Common myeloid progenitor, CD34-positive (primary cell): ENCODE measurements at regions of chr3 and their contacts with region 1.

Region 1: DNA sequence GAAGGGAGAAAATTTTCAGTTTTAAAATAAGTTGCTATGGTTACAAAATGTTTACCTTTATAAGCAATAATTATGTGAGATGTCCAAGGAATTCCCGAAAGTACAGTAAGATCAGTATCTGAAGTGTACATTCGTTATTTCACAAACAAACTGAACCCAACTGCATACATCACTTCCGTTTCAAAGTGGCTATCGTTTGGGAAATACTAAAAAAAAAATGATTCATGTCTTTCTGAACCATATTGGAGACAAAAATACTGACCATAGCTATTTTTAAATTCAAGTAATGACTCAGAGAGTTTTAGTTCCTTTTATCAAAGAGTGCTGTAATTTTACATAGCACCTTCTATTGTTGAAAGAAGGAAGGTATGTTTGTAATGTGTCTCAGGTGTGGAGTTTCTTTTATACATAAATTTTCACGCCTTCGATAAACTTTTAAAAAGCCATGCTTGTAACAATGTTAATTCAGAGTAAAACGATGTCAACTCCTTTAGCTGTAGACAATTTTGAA is 8.0 kb upstream of the ANKRD28 start:
- DNase-seq: peak; percentile 84 to 95 (median 93)
- H3K4me3 ChIP-seq: peak overlapping the region in 2 of 7 experiments; percentile 1 to 40
- H3K27ac ChIP-seq: peak overlapping the region; percentile 93 to 96
- H3K4me1 ChIP-seq: peaks cover 34 to 92% (median 59%) of the 10 kb centered on the region in 4 experiments
- H3K27me3 ChIP-seq: no peaks in the 10 kb centered on the region

Region 2: DNA sequence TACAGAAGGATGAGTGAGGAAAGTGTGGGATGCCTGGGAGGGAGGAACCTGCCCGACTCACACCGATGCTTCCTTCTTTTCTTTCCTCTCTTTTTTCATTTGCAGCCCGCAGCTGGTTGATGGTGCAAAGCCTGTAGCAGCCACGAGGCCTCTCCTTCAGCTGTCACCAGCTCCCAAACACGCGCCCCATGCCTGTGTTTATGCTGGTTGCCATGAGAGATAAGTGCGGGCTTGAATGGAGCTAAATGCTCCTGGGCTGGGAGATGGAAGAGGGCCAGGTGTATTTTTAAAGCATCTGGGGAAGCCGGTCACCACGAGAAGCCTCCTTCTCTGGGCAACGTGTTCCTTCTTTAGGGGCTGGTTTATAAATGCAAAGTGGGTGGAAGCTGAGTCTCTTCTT is 293.6 kb before region 1 on chr3:
- CTCF ChIA-PET with region 1: no interaction called
- POLR2A ChIA-PET with region 1: no interaction called
- DNase-seq: peak; percentile 68 to 89 (median 83)
- H3K4me3 ChIP-seq: no peak overlapping the region
- H3K27ac ChIP-seq: no peak overlapping the region
- H3K4me1 ChIP-seq: peaks cover 0 to 30% (median 21%) of the 10 kb centered on the region in 4 experiments
- H3K27me3 ChIP-seq: no peaks in the 10 kb centered on the region

Region 3: DNA sequence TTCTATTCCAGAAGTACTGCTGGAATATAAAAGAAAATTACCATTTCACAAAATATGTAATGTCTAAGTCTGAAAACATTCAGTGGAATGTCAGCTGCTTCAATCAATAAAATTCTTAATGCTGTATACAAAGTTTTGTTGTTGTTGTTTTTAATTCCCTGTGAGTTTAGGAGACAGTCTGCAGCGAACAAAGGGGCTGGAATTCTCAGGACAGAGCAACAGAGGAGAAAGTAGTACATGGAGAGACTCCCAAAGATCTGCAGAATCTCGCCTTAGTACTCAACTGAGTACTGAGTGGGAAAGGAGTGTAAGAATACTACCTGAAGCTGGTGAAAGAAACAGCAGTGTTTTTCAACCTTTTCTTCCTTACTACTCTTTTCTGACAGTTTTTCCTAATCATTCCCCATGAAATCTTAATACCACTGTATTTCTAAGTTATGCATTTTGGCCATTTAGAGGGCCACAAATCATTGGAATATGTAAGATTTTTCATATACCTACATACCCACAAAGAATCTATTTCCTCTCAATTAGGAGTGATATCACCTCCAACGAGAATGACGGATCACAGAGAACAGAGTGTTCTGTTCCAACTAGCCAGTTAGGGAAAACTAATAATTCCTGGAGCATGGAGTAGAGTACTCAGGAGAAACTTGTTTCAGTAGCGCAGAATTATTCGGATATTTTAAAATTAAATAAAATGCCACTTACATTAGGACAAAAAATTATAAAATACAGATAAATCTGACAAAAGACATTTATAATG is 24.0 kb before region 1 on chr3:
- CTCF ChIA-PET with region 1: interaction called, 12 read pairs
- POLR2A ChIA-PET with region 1: interaction called, 3 read pairs
- DNase-seq: no peak
- H3K4me3 ChIP-seq: no peak overlapping the region
- H3K27ac ChIP-seq: no peak overlapping the region
- H3K4me1 ChIP-seq: peaks cover 7 to 37% (median 12%) of the 10 kb centered on the region in 4 experiments
- H3K27me3 ChIP-seq: no peaks in the 10 kb centered on the region

Region 4: DNA sequence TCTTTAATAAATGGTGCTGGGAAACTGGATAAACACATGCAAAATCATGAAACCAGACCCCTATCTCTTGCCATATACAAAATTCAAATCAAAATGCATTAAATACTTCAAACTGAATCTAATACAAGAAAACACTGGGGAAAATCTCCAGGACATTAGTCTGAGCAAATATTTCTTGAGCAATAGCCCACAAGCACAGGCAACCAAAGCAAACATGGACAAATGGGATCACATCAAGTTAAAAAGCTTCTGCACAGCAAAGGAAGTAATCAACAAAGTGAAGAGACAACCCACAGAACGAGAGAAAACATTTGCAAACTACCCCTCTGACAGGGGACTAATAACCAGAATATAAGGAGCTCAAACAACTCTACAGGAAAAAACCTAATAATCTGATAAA is 14.3 kb before region 1 on chr3:
- CTCF ChIA-PET with region 1: interaction called, 54 read pairs
- POLR2A ChIA-PET with region 1: interaction called, 8 read pairs
- DNase-seq: no peak
- H3K4me3 ChIP-seq: peak overlapping the region in 6 of 7 experiments; percentile 28 to 100 (median 38)
- H3K27ac ChIP-seq: no peak overlapping the region
- H3K4me1 ChIP-seq: peaks cover 7 to 30% (median 14%) of the 10 kb centered on the region in 4 experiments
- H3K27me3 ChIP-seq: no peaks in the 10 kb centered on the region

Region 5: DNA sequence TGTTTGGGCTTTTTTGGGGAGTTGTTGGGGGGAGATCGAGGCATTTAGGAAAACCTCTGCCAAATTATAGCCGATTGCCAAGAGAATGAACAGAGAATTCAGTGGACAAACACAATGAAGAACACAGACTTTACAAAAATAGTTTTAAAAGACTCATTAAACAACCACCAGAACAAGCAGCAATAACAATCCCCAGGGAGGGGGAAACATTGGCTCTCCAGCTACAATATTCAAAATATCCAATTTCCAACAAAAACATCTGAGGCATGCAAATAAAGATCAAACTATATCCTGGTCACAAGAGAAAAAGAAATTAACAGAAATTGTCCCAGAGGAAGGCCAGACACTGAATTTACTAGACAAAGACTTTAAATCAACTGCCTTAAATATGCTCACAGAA is 16.5 kb after region 1 on chr3:
- CTCF ChIA-PET with region 1: no interaction called
- POLR2A ChIA-PET with region 1: no interaction called
- DNase-seq: no peak
- H3K4me3 ChIP-seq: no peak overlapping the region
- H3K27ac ChIP-seq: no peak overlapping the region
- H3K4me1 ChIP-seq: peaks cover 0 to 4% (median 0%) of the 10 kb centered on the region in 4 experiments
- H3K27me3 ChIP-seq: no peaks in the 10 kb centered on the region

Region 6: GRCh38 chr3:15839568-15839967 is 33.8 kb after region 1 on chr3:
- CTCF ChIA-PET with region 1: no interaction called
- POLR2A ChIA-PET with region 1: no interaction called
- DNase-seq: peak in 1 of 3 donors; percentile 10
- H3K4me3 ChIP-seq: no peak overlapping the region
- H3K27ac ChIP-seq: no peak overlapping the region
- H3K4me1 ChIP-seq: no peaks in the 10 kb centered on the region
- H3K27me3 ChIP-seq: no peaks in the 10 kb centered on the region